MCF 10A (cell line): ENCODE measurements at regions of chr22 and their contacts with region 1.

Region 1: GRCh38 chr22:30843245-30843644 is 125.3 kb downstream of the MORC2 start:
- DNase-seq: peak; percentile 98
- H3K4me3 Mint-ChIP-seq: no peak overlapping the region
- H3K27ac Mint-ChIP-seq: peak overlapping the region; percentile 97
- H3K4me1 Mint-ChIP-seq: peaks cover 40% of the 10 kb centered on the region
- H3K27me3 Mint-ChIP-seq: no peaks in the 10 kb centered on the region
- CTCF ChIP-seq: no peak

Region 2: GRCh38 chr22:30822216-30823014 is 20.8 kb before region 1 on chr22:
- CTCF ChIA-PET with region 1: no interaction called
- POLR2A ChIA-PET with region 1: interaction called, 26 read pairs
- intact Hi-C with region 1: no loop called
- DNase-seq: no peak
- H3K4me3 Mint-ChIP-seq: peak overlapping the region; percentile 65
- H3K27ac Mint-ChIP-seq: no peak overlapping the region
- H3K4me1 Mint-ChIP-seq: peaks cover 32% of the 10 kb centered on the region
- H3K27me3 Mint-ChIP-seq: no peaks in the 10 kb centered on the region
- CTCF ChIP-seq: no peak

Region 3: DNA sequence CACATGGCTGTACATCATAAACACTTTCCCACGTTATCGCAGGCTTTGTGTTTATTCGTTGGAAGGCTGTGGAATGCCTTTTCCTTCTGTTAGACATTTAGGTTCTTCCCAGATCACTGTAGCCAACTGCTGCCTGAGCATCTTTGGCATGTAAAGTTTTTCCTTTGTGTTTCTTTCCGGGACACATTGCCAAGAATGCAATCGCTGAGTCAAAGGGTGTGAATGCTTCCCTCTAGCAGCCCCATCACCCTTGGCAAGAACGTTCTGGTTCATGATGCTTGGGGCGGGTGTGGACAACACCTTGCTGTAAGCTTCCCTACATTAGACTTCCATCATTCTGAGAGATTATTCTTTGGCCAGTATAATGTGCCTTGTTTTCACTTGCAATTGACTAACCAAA is 12.3 kb before region 1 on chr22:
- CTCF ChIA-PET with region 1: interaction called, 7 read pairs
- POLR2A ChIA-PET with region 1: interaction called, 50 read pairs
- intact Hi-C with region 1: loop called (anchors 1 kb)
- DNase-seq: peak; percentile 99
- H3K4me3 Mint-ChIP-seq: peak overlapping the region; percentile 67
- H3K27ac Mint-ChIP-seq: peak overlapping the region; percentile 98
- H3K4me1 Mint-ChIP-seq: peaks cover 60% of the 10 kb centered on the region
- H3K27me3 Mint-ChIP-seq: no peaks in the 10 kb centered on the region
- CTCF ChIP-seq: no peak